Naive thymus-derived CD8-positive, alpha-beta T cell (primary cell): ENCODE measurements at regions of chr2 and their contacts with region 1.

Region 1: GRCh38 chr2:99141110-99142108 is at the start of gene C2orf15:
- DNase-seq: peak; percentile 94 to 98 (median 98)
- ATAC-seq: peak; percentile 86 to 89
- H3K4me3 Mint-ChIP-seq: peak within 1 kb of the TSS; percentile 92 to 99 (median 97)
- H3K27ac Mint-ChIP-seq: peak within 1 kb of the TSS; percentile 96 to 99 (median 99)
- H3K4me1 Mint-ChIP-seq: peaks cover 10 to 29% (median 26%) of the 10 kb centered on the region in 4 donors
- H3K27me3 Mint-ChIP-seq: no peaks in the 10 kb centered on the region
- polyA plus RNA-seq, gene C2orf15: 6.1 to 6.8 (median 6.7) TPM

Region 2: GRCh38 chr2:99096728-99097127 is 44.7 kb before region 1 on chr2:
- POLR2A ChIA-PET with region 1: no interaction called
- DNase-seq: no peak
- ATAC-seq: no peak
- H3K4me3 Mint-ChIP-seq: no peak overlapping the region
- H3K27ac Mint-ChIP-seq: peak overlapping the region in 1 of 10 donors; percentile 19
- H3K4me1 Mint-ChIP-seq: peaks cover 0 to 5% (median 2%) of the 10 kb centered on the region in 4 donors
- H3K27me3 Mint-ChIP-seq: no peaks in the 10 kb centered on the region

Region 3: DNA sequence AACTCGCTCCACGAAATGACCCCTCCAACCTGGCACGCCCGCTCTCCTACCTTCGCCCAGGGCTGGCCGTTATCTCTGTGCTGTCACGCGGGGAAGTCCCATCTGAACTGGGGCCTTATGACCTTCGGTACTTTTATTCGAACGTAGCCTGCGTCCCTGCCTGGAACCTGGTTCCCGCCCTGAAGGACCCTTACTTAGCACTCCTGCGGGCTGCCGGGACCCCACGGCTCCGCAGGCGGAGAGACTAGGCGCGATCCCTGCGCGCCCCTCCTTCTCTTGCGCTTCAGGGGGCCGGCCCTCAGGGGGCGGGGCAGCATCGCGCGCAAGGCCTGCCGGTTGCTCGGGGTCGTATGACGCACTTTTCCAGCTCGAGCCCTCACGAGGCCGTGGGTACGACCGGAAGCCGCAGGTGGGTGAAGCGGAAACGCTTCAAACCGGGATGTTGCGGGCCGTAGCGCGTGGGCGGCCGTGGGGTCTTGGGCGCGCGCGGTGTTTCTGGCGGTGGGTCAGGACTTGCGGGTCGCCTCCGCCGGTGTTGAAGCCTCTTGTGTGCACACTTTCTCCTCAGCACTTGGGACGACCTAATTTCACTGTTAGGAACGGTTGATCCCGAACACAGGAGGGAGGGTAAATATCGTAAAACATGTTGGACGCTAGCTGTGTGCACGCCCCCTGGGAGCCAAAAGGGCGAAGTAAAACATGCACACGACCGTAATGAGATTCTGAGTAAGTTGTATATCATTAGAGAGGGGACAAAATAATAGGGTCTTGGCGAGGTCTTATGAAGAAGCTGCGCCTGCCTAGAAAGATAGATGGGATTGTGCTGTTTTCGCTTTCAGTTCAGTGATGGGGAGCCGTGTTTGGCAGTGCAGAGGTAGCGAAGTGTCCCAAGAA is 13.5 kb after region 1 on chr2 and contains the starts of genes LIPT1 and TSGA10:
- POLR2A ChIA-PET with region 1: interaction called, 90 read pairs
- DNase-seq: peak; percentile 89 to 96 (median 92)
- ATAC-seq: peak; percentile 91 to 92
- H3K4me3 Mint-ChIP-seq: peak within 1 kb of the TSS in 3 of 10 donors; percentile 88 to 94 (median 89)
- H3K27ac Mint-ChIP-seq: peak within 1 kb of the TSS in 1 of 10 donors; percentile 96
- H3K4me1 Mint-ChIP-seq: peaks cover 14 to 41% (median 24%) of the 10 kb centered on the region in 4 donors
- H3K27me3 Mint-ChIP-seq: no peaks in the 10 kb centered on the region
- polyA plus RNA-seq, gene LIPT1: 19.0 to 26.9 (median 22.0) TPM
- polyA plus RNA-seq, gene TSGA10: 22.5 to 26.4 (median 24.1) TPM

Region 4: DNA sequence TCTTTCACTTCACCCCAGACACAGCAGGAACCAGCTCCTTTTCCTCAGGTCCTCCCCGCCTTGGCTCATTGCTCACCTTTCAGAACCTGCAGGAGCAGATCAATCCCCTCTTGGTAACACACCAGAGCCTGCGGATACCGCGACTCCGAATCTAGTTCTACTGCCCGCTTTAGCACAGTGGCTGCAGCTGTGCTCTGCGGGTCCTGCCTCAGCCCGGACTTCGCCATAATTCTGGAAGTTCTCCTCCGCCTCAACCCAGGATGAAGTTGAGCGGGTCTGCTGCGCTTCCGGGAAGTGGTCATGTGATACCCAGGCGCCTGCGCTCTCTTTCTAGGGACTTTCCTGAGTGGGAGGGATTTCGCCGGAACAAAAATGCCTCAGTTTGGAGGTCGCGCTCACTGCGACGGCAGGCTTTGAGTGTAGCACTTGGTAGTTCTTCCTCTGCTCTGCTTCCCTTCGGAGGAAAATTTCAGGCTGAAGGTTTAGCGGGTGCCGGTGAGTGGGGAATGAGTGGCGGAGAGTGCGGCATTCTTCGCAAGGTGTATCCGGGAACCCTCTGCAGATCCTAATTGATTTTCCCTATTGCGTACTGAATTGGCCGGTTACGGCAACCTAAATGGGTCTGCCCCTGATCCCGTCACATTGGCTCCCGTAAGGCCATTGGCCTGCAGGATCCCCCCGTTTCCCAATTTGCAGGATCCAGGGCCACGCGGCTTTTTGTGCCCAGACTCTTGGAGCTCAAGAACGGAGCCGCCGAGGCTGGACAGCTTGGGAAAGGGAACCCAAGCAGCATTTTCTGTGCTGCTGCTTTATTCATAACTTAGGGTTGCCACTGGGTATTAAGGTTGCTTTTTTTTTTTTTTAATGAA is 39.6 kb after region 1 on chr2 and contains the starts of genes MITD1 and MRPL30:
- POLR2A ChIA-PET with region 1: interaction called, 15 read pairs
- DNase-seq: peak; percentile 77 to 94 (median 92)
- ATAC-seq: peak; percentile 94 to 96
- H3K4me3 Mint-ChIP-seq: peak within 1 kb of the TSS; percentile 92 to 100 (median 99)
- H3K27ac Mint-ChIP-seq: peak within 1 kb of the TSS; percentile 99 to 100 (median 99)
- H3K4me1 Mint-ChIP-seq: peaks cover 32 to 73% (median 66%) of the 10 kb centered on the region in 4 donors
- H3K27me3 Mint-ChIP-seq: no peaks in the 10 kb centered on the region
- polyA plus RNA-seq, gene MITD1: 40.4 to 49.0 (median 43.8) TPM
- polyA plus RNA-seq, gene MRPL30: 19.1 to 23.5 (median 20.4) TPM

Region 5: GRCh38 chr2:99217929-99218501 is 76.6 kb after region 1 on chr2:
- POLR2A ChIA-PET with region 1: no interaction called
- DNase-seq: no peak
- ATAC-seq: no peak
- H3K4me3 Mint-ChIP-seq: no peak overlapping the region
- H3K27ac Mint-ChIP-seq: peak overlapping the region in 1 of 10 donors; percentile 52
- H3K4me1 Mint-ChIP-seq: peaks cover 0 to 4% (median 0%) of the 10 kb centered on the region in 4 donors
- H3K27me3 Mint-ChIP-seq: no peaks in the 10 kb centered on the region